Posterior vena cava (tissue), 2 donors: ENCODE measurements at regions of chr1 and their contacts with region 1.

Region 1: GRCh38 chr1:76444773-76445172 is 370.2 kb downstream of the ST6GALNAC3 start:
- DNase-seq: no peak

Region 2: DNA sequence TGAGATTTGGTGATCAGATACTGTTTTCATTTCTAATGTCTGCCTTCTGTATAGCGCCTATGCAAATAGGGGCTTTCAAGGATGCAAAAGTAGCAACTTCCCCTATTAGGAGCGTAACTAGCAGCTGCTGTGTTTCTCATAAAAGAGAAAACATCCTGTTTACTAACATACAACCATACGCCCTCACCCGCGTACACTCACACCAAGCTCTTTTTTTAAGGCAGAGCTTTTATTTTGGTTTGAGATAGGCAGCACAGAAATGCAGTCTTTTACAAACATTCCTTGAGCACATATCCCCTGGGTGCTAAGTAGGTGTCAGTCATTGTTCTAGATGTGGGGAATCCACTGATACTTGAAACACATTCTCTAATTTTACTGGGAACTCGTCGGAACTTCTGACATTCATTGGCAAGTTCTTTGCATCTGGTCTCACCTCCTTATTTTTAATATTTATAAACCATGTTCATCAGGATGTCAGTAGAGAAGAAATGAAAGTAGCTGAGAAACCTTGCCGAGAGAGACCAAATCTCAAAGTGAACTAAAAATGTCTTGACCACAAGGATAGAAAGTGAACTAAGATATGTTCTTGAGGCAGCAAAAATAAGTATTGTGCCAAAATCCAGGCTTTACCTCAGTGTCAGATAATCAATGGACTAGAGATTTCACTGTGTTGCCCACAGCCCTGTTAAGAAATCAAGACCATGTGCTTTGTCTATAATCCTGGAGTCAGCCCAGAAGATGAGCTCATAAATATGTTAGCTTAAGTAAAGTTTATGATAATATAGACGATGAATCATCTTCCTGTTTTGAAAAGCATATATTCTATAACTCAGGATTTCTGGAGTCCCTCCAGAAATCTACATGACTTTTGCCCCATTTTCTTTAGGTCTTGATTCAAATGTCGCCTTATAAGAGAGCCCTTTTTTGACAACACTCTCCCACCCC is 19.3 kb before region 1 on chr1:
- intact Hi-C with region 1: loop called in 1 of 2 experiments (anchors 1 kb)
- DNase-seq: no peak